Psoas muscle (tissue), 8 donors: ENCODE measurements at regions of chr10 and their contacts with region 1.

Region 1: GRCh38 chr10:5442065-5442989 is 30.0 kb downstream of the NET1 start:
- DNase-seq: no peak
- ATAC-seq: peak in 2 of 4 donors; percentile 30 to 63
- H3K4me3 ChIP-seq: no peak overlapping the region
- H3K27ac ChIP-seq: no peak overlapping the region
- H3K4me1 ChIP-seq: peaks cover 19% of the 10 kb centered on the region
- H3K27me3 ChIP-seq: no peaks in the 10 kb centered on the region
- CTCF ChIP-seq: peak; percentile 79

Region 2: GRCh38 chr10:5623081-5623748 is 180.9 kb after region 1 on chr10:
- intact Hi-C with region 1: loop called (anchors 1 to 5 kb)
- DNase-seq: peak; percentile 91 to 95
- ATAC-seq: peak; percentile 87 to 94 (median 90)
- H3K4me3 ChIP-seq: no peak overlapping the region
- H3K27ac ChIP-seq: no peak overlapping the region
- H3K4me1 ChIP-seq: peaks cover 21% of the 10 kb centered on the region
- H3K27me3 ChIP-seq: no peaks in the 10 kb centered on the region
- CTCF ChIP-seq: peak; percentile 90